Right ventricle myocardium inferior (tissue), 1 donor: ENCODE measurements at regions of chr10 and their contacts with region 1.

Region 1: GRCh38 chr10:121036431-121036830 is 185.3 kb downstream of the WDR11 start:
- DNase-seq: no peak
- ATAC-seq: peak; percentile 30

Region 2: DNA sequence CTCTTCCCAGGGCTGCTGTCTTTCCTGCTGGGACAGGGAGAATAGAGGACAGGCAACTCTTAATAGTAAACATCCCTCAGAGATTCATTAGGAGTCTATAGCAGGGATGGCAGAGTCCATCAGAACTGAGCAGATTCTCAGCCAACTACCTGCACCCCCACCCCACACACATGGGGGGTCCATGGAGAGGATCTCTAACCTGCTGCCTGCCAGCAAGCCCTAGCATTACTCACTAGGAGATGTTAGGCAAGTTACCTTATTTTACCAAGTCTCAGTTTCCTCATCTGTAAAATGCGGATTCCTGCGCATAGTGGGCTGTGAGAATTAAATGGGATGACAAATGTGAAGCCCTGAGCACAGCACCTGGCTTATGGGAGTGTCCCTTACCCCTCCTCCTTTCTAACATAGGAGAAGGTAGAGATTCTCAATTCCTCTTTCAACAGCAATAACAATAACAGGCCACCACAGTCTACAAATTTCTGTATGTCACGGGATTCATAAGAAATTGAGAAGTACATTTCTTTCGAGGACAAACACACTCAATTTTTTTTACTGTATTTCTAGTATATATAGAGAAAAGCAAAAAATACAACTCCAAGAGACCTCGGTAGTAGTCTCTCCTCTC is 209.1 kb before region 1 on chr10:
- intact Hi-C with region 1: no loop called
- DNase-seq: no peak
- ATAC-seq: no peak

Region 3: DNA sequence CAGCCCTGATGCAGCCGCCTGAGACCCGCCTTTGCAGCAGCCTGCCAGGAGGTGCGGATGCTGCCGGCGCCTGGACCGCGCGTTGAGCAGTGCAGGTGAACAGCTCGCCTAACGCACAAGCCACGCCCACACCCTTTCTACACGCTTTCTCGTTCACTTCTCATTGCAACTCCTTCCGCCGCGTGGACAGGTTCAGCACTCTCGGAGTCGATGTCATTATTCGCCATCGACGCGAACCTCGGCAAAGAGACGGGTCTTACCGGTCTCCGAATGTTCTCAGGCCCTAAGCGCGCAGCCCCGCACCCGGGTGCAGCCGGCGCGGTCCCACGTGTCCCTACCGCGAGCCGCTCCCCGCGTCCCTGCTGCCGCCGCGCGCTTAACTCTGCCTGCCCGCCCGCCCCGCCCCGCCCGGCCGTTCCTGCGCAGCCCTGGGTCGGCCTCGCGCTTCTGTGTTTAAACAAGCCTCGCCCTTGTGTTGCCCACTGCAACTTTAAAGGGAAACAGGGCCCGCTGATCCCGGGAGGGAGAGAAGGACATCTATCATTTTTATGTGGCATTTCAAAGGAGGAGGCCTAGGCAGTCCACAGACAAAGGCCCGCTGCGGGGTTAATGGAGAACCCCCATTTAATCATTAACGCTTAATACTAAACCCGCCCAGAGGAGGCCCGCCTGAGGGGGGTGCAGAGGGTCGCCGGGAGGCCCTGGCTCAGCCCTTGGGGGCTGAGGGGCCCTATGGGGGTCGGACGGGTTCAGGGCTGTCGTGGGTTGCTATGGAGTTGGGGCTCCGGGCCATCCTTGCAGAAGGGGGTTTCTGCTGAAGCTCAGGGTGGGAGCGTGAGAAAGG is 56.8 kb before region 1 on chr10:
- intact Hi-C with region 1: no loop called
- DNase-seq: no peak
- ATAC-seq: no peak

Region 4: DNA sequence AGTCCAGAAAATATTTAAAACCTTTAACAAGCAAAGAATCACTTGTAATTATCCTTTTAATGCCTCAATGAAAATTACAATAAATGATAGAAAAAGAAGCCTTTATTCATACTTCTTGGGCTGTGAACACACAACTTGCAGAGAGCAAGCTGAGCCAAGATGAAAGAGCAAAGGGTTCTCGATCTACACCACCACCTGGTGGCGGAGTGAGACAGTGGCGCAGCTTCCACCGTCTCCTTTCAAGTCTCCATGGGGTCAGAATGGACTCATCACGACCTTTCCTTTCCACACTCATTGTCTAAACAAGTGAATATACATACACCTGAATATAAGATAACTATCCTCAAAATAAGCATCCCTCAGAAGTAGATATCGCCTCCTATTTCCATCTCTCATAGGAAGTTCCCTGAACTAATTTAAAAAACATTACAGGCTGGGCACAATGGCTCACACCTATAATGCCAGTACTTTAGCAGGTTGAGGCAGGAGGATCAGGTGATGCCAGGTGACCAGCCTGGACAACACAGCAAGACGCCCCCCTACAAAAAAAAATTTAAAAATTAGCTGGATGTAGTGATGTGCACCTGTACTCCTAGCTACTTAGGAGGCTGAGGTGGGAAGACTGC is 850.7 kb after region 1 on chr10:
- intact Hi-C with region 1: loop called (anchors 5 kb)
- DNase-seq: no peak
- ATAC-seq: peak; percentile 67